Activated CD4-positive, alpha-beta T cell treated with anti-CD3 and anti-CD28 coated beads for 36 hours (primary cell): ENCODE measurements at regions of chr11 and their contacts with region 1.

Region 1: DNA sequence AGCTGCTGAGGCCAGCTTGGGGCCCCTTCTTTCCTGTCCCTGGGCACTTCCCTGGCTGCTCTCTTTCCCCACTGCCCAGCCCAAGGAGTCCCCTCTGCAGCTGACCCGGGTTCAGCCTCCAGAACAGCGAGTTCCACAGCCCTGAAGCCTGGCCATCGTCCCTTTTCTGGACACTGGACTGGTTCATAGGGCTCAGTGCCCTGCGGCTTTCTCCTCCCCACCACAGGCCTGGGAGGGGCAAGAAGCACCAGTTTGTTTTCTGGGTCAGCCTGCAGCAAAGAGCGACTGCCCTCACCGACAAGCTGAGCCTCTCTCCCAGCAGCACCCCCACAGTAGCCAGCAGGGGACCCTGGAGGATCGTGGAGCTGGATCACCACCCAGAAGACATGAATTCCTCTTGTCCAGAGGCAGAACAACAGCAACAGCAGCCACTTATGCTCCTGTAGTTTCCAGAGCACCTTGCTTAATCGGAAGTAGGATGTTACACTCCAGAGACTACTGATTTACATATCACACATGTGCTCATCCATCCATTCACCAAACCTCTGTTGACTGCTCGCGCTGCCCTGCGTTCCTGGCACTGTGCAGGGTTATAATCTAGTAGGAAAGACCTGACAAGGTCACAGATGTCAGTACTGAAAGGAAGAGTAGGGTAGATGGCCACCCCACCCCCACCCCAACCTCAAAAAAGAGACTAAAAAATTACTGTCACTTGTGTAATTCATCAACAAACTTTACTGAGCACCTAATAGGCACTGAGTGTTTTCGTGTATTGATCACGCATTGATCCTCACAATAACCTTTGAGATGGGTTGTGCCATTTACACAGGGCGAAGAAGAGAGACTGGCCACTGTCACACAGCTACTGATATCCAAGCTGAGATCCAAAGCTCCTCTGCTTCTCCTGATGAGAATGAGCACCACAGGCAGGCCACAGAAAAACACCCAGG is 13.0 kb upstream of the CXCR5 start:
- DNase-seq: peak; percentile 61
- ATAC-seq: peak; percentile 70
- H3K4me3 Mint-ChIP-seq: peak overlapping the region; percentile 71
- H3K27ac Mint-ChIP-seq: peak overlapping the region; percentile 99
- H3K4me1 Mint-ChIP-seq: peaks cover 57% of the 10 kb centered on the region
- H3K27me3 Mint-ChIP-seq: no peaks in the 10 kb centered on the region

Region 2: DNA sequence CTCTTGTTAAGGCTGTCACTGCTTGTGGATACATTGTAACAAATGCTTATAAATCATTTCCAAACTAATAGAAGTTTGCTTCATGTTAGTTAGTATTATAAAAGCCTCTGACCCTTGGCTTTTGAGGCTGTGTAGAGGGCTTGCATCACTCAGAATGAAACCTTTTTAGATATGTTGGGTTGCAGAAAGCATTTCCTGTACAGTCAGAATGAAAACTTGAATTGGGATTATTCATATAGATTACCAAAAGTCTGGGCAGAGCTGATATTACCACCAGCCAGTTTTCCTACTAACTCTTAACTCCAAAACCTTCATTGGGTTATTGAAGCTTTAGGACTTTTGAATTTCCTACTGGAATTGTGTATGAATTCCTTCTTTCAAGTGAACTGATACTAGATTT is 422.4 kb before region 1 on chr11:
- CTCF ChIA-PET with region 1: no interaction called
- POLR2A ChIA-PET with region 1: no interaction called
- intact Hi-C with region 1: loop called in 1 of 2 experiments (anchors 10 kb)
- DNase-seq: peak; percentile 10
- ATAC-seq: peak; percentile 64
- H3K4me3 Mint-ChIP-seq: no peak overlapping the region
- H3K27ac Mint-ChIP-seq: no peak overlapping the region
- H3K4me1 Mint-ChIP-seq: peaks cover 73% of the 10 kb centered on the region
- H3K27me3 Mint-ChIP-seq: no peaks in the 10 kb centered on the region

Region 3: GRCh38 chr11:118807800-118808778 is 62.6 kb before region 1 on chr11:
- CTCF ChIA-PET with region 1: no interaction called
- POLR2A ChIA-PET with region 1: no interaction called
- intact Hi-C with region 1: no loop called
- DNase-seq: no peak
- ATAC-seq: no peak
- H3K4me3 Mint-ChIP-seq: no peak overlapping the region
- H3K27ac Mint-ChIP-seq: no peak overlapping the region
- H3K4me1 Mint-ChIP-seq: peaks cover 9% of the 10 kb centered on the region
- H3K27me3 Mint-ChIP-seq: peaks cover 2% of the 10 kb centered on the region

Region 4: DNA sequence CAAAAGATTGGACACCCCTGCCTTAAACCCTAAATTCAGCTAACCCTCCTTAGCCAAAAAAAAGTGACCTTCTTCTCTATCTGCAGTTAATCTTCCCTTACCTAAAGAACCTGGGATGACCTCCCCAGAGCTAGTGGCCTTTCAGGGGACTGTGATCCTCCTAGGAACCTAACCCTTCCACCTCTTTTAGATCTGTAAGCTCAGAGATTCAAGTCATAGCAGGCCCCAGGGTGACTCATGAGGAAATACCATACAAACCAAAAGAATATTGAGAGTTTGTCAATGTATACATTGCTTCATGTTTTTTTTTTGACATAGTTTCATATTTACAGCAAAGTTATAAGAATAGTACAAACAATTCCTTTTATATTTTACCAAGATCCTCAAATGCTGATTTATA is 25.3 kb before region 1 on chr11:
- CTCF ChIA-PET with region 1: interaction called, 4 read pairs
- POLR2A ChIA-PET with region 1: interaction called, 3 read pairs
- intact Hi-C with region 1: loop called (anchors 1 to 2 kb)
- DNase-seq: peak; percentile 55
- ATAC-seq: peak; percentile 70
- H3K4me3 Mint-ChIP-seq: peak overlapping the region; percentile 5
- H3K27ac Mint-ChIP-seq: peak overlapping the region; percentile 68
- H3K4me1 Mint-ChIP-seq: peaks cover 47% of the 10 kb centered on the region
- H3K27me3 Mint-ChIP-seq: no peaks in the 10 kb centered on the region

Region 5: DNA sequence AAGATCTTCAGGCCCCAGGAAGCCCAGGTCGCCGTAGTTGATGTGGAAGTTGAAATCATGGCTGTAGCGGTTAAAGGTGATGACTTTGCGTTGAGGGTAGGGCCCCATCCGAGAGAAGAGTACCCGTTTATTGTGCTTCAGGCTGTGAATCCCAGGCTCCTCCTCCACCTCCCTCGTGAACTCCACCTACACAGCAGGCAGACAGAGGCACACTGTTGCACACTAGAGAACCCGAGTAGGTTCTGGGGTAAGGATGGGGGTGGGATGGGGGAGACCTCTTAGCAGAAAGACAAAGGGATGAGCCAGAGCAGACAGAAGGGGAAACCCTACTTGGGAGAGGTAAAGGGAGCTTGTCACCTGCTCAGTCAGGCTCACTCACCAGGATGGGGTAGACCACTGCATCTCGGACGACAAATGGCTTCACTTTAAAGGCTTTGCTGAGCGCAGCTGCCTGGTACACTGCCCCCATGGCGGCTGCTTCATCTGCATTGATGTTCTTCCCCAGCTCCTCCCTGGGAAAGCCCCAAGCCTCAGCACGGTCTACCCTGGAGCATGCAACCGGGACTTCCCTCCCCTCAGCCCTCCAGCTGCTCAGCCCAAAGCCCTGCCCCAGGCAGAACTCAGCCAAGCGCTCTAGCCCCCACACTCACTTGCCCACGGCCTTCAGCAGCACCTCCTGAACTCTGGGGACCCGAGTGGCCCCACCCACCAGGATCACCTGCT is 180.9 kb after region 1 on chr11:
- CTCF ChIA-PET with region 1: no interaction called
- POLR2A ChIA-PET with region 1: no interaction called
- intact Hi-C with region 1: no loop called
- DNase-seq: peak; percentile 51
- ATAC-seq: peak; percentile 50
- H3K4me3 Mint-ChIP-seq: no peak overlapping the region
- H3K27ac Mint-ChIP-seq: peak overlapping the region; percentile 68
- H3K4me1 Mint-ChIP-seq: peaks cover 38% of the 10 kb centered on the region
- H3K27me3 Mint-ChIP-seq: no peaks in the 10 kb centered on the region